Dendritic cell treated with granulocyte-macrophage colony-stimulating factor and Interleukin-4, amounts not matched to agents 40 ng/mL and 50 ng/mL, for 4 days (primary cell): ENCODE measurements at regions of chr22 and their contacts with region 1.

Region 1: GRCh38 chr22:22348127-22348814 is 103.7 kb downstream of the VPREB1 start:
- H3K4me3 Mint-ChIP-seq: no peak overlapping the region
- H3K27ac Mint-ChIP-seq: no peak overlapping the region
- H3K4me1 Mint-ChIP-seq: peaks cover 19% of the 10 kb centered on the region
- H3K27me3 Mint-ChIP-seq: peaks cover 21% of the 10 kb centered on the region

Region 2: GRCh38 chr22:22060200-22061084 is 287.8 kb before region 1 on chr22:
- intact Hi-C with region 1: no loop called
- H3K4me3 Mint-ChIP-seq: no peak overlapping the region
- H3K27ac Mint-ChIP-seq: no peak overlapping the region
- H3K4me1 Mint-ChIP-seq: peaks cover 43% of the 10 kb centered on the region
- H3K27me3 Mint-ChIP-seq: peaks cover 2% of the 10 kb centered on the region

Region 3: DNA sequence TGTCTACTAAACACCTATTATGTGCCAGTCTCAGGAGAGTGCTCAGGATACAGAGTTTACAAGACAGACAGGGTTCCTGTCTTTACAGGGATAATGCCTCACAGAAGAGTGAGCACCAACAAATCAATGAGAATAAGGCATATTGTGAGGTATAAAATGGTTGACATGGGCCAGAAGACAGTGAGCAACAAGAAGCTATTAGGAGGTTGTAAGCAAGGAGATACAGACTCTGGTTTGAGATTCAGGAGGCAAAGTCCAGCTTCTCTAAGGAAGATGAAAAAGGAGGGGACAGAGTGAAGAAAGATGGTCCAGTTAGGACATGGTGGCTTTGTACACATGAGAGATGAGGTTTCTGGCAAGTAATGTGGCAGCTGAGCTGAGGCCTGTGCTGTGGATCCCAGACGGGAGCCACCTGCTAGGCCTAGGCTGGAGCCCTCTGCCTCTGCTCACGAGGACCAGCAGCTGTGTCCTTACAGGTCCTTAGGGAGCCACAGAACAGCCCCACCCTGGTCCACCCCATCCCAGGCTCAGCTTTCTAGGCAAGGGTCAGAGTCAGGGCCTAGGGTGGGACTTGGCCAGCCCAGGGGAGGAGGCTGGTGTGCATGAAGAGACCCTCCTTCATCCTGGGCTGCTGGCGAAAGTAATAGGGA is 49.7 kb after region 1 on chr22:
- intact Hi-C with region 1: loop called (anchors 2 kb)
- H3K4me3 Mint-ChIP-seq: no peak overlapping the region
- H3K27ac Mint-ChIP-seq: no peak overlapping the region
- H3K4me1 Mint-ChIP-seq: peaks cover 6% of the 10 kb centered on the region
- H3K27me3 Mint-ChIP-seq: peaks cover 19% of the 10 kb centered on the region